Activated CD8-positive, alpha-beta T cell treated with anti-CD3 and anti-CD28 coated beads, Interleukin-2, amount 10 ng/mL, durations not matched to agents 7 days and 5 days (primary cell): ENCODE measurements at regions of chr11 and their contacts with region 1.

Region 1: GRCh38 chr11:95705485-95706124 is 84.0 kb downstream of the FAM76B start:
- DNase-seq: peak; percentile 92
- ATAC-seq: peak; percentile 91
- H3K4me3 Mint-ChIP-seq: no peak overlapping the region
- H3K27ac Mint-ChIP-seq: no peak overlapping the region
- H3K4me1 Mint-ChIP-seq: peaks cover 9% of the 10 kb centered on the region
- H3K27me3 Mint-ChIP-seq: no peaks in the 10 kb centered on the region

Region 2: GRCh38 chr11:95231127-95231880 is 474.3 kb before region 1 on chr11 and contains the start of gene SESN3:
- CTCF ChIA-PET with region 1: interaction called, 112 read pairs
- POLR2A ChIA-PET with region 1: interaction called, 14 read pairs
- DNase-seq: peak; percentile 99
- ATAC-seq: peak; percentile 96
- H3K4me3 Mint-ChIP-seq: no peak within 1 kb of the TSS
- H3K27ac Mint-ChIP-seq: peak within 1 kb of the TSS; percentile 86
- H3K4me1 Mint-ChIP-seq: peaks cover 44% of the 10 kb centered on the region
- H3K27me3 Mint-ChIP-seq: peaks cover 2% of the 10 kb centered on the region
- total RNA-seq, gene SESN3: 29.1 to 31.5 TPM

Region 3: GRCh38 chr11:95503047-95503446 is 202.6 kb before region 1 on chr11:
- CTCF ChIA-PET with region 1: interaction called, 14 read pairs
- POLR2A ChIA-PET with region 1: no interaction called
- DNase-seq: no peak
- ATAC-seq: no peak
- H3K4me3 Mint-ChIP-seq: no peak overlapping the region
- H3K27ac Mint-ChIP-seq: no peak overlapping the region
- H3K4me1 Mint-ChIP-seq: peaks cover 9% of the 10 kb centered on the region
- H3K27me3 Mint-ChIP-seq: no peaks in the 10 kb centered on the region

Region 4: GRCh38 chr11:95671768-95672167 is 33.8 kb before region 1 on chr11:
- CTCF ChIA-PET with region 1: interaction called, 15 read pairs
- POLR2A ChIA-PET with region 1: no interaction called
- DNase-seq: no peak
- ATAC-seq: no peak
- H3K4me3 Mint-ChIP-seq: no peak overlapping the region
- H3K27ac Mint-ChIP-seq: no peak overlapping the region
- H3K4me1 Mint-ChIP-seq: peaks cover 13% of the 10 kb centered on the region
- H3K27me3 Mint-ChIP-seq: no peaks in the 10 kb centered on the region

Region 5: GRCh38 chr11:95729462-95729861 is 23.9 kb after region 1 on chr11:
- CTCF ChIA-PET with region 1: interaction called, 13 read pairs
- POLR2A ChIA-PET with region 1: no interaction called
- DNase-seq: no peak
- ATAC-seq: no peak
- H3K4me3 Mint-ChIP-seq: no peak overlapping the region
- H3K27ac Mint-ChIP-seq: no peak overlapping the region
- H3K4me1 Mint-ChIP-seq: peaks cover 7% of the 10 kb centered on the region
- H3K27me3 Mint-ChIP-seq: peaks cover 12% of the 10 kb centered on the region